Left cardiac atrium (tissue), 4 donors: ENCODE measurements at regions of chr17 and their contacts with region 1.

Region 1: GRCh38 chr17:82775001-82775823 is 23.3 kb downstream of the TBCD start:
- DNase-seq: peak; percentile 75
- ATAC-seq: peak; percentile 50 to 66

Region 2: DNA sequence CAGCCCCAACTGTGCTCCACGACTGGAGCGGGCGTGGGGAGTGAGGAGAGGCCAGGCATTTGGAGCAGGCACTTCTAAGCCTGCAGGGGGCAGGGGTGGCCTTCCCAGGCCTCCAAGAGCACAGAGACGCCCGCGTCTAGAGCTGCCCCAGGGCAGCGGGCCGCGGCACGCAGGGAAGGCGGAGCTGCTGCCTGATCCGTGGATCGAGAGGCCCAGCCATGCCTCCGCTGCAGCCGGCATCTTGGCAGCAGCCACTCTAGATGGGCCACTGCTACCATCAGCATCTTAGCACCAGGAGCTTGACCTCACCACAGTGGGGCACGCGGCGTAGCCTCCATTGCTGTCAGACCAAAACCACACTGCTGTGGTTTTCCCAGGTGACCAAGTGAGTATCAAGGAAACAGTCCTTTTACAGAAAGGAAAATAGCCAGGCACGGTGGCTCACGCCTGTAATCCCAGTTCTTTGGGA is 106.5 kb before region 1 on chr17:
- intact Hi-C with region 1: loop called in 1 of 2 experiments (anchors 5 kb)
- DNase-seq: peak; percentile 53
- ATAC-seq: peak; percentile 87

Region 3: DNA sequence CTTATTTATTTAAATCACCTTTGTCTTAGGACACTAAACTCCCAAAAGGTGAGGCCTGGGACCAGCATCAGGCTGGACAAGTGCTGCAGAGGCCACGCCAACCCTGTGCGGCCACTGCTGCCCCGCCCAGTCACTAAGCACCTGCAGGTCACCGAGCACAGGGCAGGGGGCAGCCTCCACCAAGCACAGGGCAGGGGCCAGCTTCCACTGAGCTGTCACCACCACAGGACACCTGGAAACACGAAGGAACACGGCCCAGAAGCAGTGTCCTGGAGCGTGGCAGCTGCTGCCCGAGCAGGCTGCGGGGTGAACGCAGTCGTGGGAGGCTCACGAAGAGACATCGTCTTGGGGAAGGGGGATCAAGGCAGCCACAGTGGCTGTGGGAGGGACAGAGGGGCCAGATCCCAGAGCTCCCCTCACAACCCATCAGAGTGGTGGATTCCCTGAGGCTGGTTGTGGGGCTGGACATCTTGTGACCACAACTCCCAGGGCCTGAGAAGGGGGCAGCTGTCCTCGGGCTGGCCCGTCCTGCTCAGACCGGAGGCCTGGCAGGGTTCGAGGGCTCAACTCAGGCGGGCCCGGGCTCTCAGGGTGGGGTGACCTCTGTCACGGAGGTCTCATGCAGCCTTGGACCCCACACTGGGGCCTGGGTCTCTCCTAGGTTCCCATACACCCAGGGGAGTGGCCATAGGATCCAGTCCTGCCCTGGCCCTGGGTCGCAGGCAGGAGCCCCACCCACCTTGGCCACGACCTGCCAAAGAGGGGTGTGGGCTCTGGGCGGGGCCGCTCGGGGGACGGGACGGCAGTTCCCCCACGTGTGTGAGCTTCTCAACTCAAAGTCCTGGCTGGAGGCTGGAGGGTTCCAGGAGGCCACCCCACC is 95.4 kb before region 1 on chr17:
- intact Hi-C with region 1: no loop called
- DNase-seq: no peak
- ATAC-seq: no peak